MCF 10A (cell line): ENCODE measurements at regions of chrX and their contacts with region 1.

Region 1: GRCh38 chrX:45801554-45801953 is 600.9 kb upstream of the DIPK2B start:
- DNase-seq: peak; percentile 66
- H3K4me3 Mint-ChIP-seq: peak overlapping the region; percentile 47
- H3K27ac Mint-ChIP-seq: peak overlapping the region; percentile 67
- H3K4me1 Mint-ChIP-seq: peaks cover 24% of the 10 kb centered on the region
- H3K27me3 Mint-ChIP-seq: peaks cover 49% of the 10 kb centered on the region
- CTCF ChIP-seq: peak; percentile 46

Region 2: DNA sequence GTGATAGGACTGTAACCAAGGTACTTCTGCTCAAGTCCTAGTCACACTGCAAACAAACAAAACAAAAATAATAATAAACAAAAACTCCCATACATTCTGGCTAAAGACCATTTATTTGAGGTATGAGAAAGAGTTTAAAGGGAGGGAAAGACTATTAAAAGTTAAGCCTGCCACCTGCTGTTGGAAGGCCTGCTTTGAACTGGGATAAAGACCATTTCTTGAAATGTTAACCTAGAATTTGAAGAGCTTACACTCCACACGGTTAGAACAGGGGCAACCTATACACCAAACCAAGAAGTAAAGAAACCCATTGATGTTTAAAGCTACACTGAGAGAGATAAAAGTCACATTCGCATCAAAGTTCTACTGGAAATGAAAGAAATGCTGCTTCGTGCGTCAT is 52.2 kb before region 1 on chrX:
- CTCF ChIA-PET with region 1: interaction called, 4 read pairs
- POLR2A ChIA-PET with region 1: interaction called, 10 read pairs
- intact Hi-C with region 1: no loop called
- DNase-seq: no peak
- H3K4me3 Mint-ChIP-seq: no peak overlapping the region
- H3K27ac Mint-ChIP-seq: peak overlapping the region; percentile 60
- H3K4me1 Mint-ChIP-seq: peaks cover 22% of the 10 kb centered on the region
- H3K27me3 Mint-ChIP-seq: peaks cover 25% of the 10 kb centered on the region
- CTCF ChIP-seq: peak; percentile 41

Region 3: DNA sequence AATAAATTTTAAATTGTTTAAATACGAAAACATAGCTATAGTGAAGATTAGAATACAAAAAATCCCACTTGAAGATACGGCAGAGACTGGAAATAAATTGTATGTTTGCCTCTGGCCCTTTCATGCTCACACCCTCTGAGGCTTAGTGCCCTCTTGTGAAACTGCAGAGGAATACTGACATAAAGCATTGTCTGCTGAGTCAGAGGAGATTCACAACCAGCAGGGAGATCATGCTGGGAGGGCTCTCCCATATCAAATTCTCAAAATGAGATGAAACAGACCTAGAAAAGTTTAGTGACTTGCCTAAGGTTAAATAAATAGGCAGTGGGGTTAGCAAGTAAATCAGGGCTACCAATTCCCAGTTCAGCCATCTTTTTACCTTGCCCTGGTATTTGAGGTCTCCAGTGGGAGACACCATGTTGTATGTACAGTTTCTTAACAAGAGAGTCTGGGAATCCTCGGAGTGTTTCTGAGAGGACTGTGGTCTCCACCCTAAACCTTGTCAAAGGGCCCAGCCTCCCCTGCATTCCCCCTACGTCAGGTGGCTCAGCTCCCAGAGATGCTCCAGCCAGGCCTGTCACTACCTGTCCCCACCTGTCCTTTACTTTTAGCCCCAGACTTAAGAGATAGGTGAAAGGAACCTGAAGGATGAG is 19.5 kb before region 1 on chrX:
- CTCF ChIA-PET with region 1: interaction called, 6 read pairs
- POLR2A ChIA-PET with region 1: interaction called, 14 read pairs
- intact Hi-C with region 1: no loop called
- DNase-seq: peak; percentile 71
- H3K4me3 Mint-ChIP-seq: no peak overlapping the region
- H3K27ac Mint-ChIP-seq: peak overlapping the region; percentile 60
- H3K4me1 Mint-ChIP-seq: peaks cover 47% of the 10 kb centered on the region
- H3K27me3 Mint-ChIP-seq: peaks cover 80% of the 10 kb centered on the region
- CTCF ChIP-seq: peak; percentile 16

Region 4: GRCh38 chrX:45849253-45849862 is 47.8 kb after region 1 on chrX:
- CTCF ChIA-PET with region 1: interaction called, 5 read pairs
- POLR2A ChIA-PET with region 1: interaction called, 23 read pairs
- intact Hi-C with region 1: loop called (anchors 1 kb)
- DNase-seq: peak; percentile 75
- H3K4me3 Mint-ChIP-seq: peak overlapping the region; percentile 89
- H3K27ac Mint-ChIP-seq: peak overlapping the region; percentile 67
- H3K4me1 Mint-ChIP-seq: no peaks in the 10 kb centered on the region
- H3K27me3 Mint-ChIP-seq: peaks cover 14% of the 10 kb centered on the region
- CTCF ChIP-seq: peak; percentile 26

Region 5: GRCh38 chrX:46376246-46376885 is 574.8 kb after region 1 on chrX:
- CTCF ChIA-PET with region 1: interaction called, 20 read pairs
- POLR2A ChIA-PET with region 1: interaction called, 13 read pairs
- intact Hi-C with region 1: loop called (anchors 5 kb)
- DNase-seq: peak; percentile 55
- H3K4me3 Mint-ChIP-seq: no peak overlapping the region
- H3K27ac Mint-ChIP-seq: no peak overlapping the region
- H3K4me1 Mint-ChIP-seq: no peaks in the 10 kb centered on the region
- H3K27me3 Mint-ChIP-seq: peaks cover 77% of the 10 kb centered on the region
- CTCF ChIP-seq: peak; percentile 44